Gastrocnemius medialis (tissue), 4 donors: ENCODE measurements at regions of chr2 and their contacts with region 1.

Region 1: DNA sequence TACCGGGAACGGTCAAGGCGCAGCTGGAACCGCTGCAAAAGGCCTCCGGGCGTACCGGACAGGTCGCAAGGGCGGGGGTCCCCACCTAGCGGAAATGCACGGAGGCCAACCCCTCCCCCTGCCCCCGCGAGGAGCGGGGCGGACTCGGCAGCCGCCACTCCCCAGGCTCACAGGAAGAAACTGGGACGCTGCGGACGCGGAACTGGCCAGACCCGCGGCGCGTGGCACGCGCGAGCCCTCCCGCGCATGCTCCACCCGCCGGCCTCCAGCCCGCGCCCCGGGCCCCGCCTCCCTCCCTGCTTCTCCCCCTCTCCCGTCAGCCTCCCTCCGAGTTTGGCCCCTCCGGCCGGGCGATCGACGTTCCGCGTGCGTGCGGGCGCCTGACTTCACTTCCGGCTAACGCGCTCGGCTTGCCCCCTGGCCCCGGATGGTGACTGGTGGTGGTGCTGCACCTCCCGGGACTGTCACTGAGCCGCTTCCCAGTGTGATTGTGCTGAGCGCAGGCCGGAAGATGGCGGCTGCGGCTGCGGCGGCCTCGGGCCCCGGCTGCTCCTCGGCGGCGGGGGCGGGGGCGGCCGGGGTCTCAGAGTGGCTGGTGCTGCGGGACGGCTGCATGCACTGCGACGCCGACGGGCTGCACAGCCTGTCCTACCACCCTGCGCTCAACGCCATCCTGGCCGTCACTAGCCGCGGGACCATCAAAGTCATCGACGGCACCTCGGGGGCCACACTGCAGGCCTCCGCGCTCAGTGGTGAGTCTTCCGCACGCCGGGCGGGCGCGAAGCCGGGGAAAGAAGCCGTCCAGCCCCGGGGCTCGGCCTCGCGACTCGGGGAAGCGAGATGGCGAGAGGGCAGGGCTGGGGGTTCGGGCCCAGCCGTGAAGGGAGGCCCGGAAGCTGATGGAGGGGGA is at the start of gene BIRC6:
- DNase-seq: peak; percentile 99
- ATAC-seq: peak; percentile 89 to 91
- H3K4me3 ChIP-seq: peak within 1 kb of the TSS; percentile 89 to 100 (median 95)
- H3K27ac ChIP-seq: peak within 1 kb of the TSS; percentile 95 to 100 (median 99)
- H3K4me1 ChIP-seq: peaks cover 36 to 42% of the 10 kb centered on the region in 2 donors
- H3K27me3 ChIP-seq: no peaks in the 10 kb centered on the region
- CTCF ChIP-seq: peak in 1 of 5 experiments; percentile 31
- POLR2A ChIP-seq: peak; percentile 91 to 93
- total RNA-seq, gene BIRC6: 60.1 to 107 (median 77.6) TPM

Region 2: GRCh38 chr2:32063310-32064161 is 293.5 kb before region 1 on chr2 and contains the start of gene SPAST:
- in situ Hi-C with region 1: no loop called
- intact Hi-C with region 1: loop called (anchors 5 kb)
- DNase-seq: peak; percentile 96 to 97
- ATAC-seq: peak; percentile 96
- H3K4me3 ChIP-seq: peak within 1 kb of the TSS; percentile 68 to 97 (median 82)
- H3K27ac ChIP-seq: peak within 1 kb of the TSS; percentile 86 to 97 (median 88)
- H3K4me1 ChIP-seq: peaks cover 18% of the 10 kb centered on the region in 2 donors
- H3K27me3 ChIP-seq: no peaks in the 10 kb centered on the region
- CTCF ChIP-seq: peak; percentile 77 to 79 (median 77)
- POLR2A ChIP-seq: peak; percentile 71 to 88
- total RNA-seq, gene SPAST: 25.0 to 30.6 (median 28.9) TPM

Region 3: DNA sequence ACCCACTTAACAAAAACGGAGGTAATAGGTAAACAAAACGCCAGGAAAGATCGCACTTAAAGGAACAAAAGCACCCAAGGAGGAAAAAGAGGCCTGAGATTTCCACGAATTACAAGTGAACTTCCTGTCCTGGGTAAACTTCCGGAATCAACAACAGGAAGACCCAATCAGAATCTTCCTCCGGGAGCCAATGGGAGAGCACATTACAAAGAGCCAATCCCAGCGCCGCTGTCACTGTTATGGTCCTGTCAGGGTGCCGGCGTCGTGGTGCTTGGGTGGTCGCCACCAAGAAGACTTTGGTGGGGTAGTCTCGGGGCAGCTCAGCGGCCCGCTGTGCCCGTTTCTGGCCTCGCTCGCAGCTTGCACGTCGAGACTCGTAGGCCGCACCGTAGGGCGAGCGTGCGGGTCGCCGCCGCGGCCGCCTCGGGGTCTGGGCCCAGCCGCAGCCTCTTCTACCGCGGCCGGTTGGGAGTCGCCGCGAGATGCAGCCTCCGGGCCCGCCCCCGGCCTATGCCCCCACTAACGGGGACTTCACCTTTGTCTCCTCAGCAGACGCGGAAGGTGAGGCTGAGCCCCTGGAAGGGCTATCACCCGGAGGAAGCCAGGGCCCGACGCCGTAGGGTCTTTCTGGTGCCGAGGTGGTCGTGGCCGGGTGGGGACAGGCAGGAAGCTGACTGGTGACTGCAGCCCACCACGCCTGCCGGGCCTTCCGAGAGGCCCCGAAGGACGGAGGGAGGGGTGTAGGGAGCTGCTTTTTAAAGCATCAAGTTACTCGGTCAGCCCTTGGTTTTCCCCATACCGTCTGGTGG is 79.1 kb before region 1 on chr2 and contains the start of gene YIPF4:
- in situ Hi-C with region 1: no loop called
- intact Hi-C with region 1: loop called (anchors 2 kb)
- DNase-seq: peak; percentile 78 to 89
- ATAC-seq: peak; percentile 100
- H3K4me3 ChIP-seq: peak within 1 kb of the TSS; percentile 87 to 97 (median 92)
- H3K27ac ChIP-seq: peak within 1 kb of the TSS; percentile 85 to 90 (median 88)
- H3K4me1 ChIP-seq: peaks cover 12% of the 10 kb centered on the region in 2 donors
- H3K27me3 ChIP-seq: no peaks in the 10 kb centered on the region
- CTCF ChIP-seq: no peak
- POLR2A ChIP-seq: peak; percentile 55 to 68
- total RNA-seq, gene YIPF4: 19.5 to 27.3 (median 23.5) TPM

Region 4: DNA sequence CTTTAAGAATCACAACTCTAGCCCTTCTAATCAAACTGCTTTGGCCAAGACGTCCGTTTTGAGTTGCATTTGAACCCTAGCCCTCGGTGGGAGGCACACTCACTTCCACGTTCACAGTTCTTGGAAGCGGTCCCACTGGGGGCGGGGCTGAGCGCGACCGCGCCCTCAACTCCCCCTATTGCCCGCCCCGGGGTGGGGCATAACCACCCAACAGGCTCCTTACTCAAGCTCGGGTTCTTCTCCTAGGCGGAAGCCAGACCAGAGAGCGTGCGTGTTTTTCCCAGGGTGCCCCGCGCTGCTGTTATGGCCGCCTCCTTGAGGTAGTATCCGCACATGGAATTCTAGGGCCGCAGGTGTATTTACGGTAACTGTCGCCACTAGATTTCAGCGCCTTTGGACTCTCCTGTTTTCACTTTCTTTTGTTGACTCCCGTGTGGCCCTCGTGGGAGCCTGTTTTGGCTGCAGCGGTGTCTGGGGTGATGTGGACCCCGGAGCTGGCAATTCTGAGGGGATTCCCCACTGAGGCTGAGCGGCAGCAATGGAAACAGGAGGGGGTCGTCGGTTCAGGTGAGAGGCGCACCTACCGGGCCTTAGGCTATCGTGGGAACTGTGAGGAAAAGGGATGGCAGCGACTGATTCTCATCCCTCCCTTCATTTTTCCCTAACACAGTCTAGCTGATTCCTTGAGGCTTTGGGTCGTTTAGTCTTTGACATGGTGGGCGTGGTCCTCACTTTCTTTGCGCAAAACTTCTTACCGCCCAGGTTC is 271.0 kb after region 1 on chr2 and contains the start of gene TTC27:
- in situ Hi-C with region 1: no loop called
- intact Hi-C with region 1: loop called (anchors 10 kb)
- DNase-seq: peak; percentile 90 to 94
- ATAC-seq: peak; percentile 96 to 98
- H3K4me3 ChIP-seq: peak within 1 kb of the TSS; percentile 76 to 97 (median 82)
- H3K27ac ChIP-seq: peak within 1 kb of the TSS; percentile 45 to 78 (median 62)
- H3K4me1 ChIP-seq: peaks cover 13% of the 10 kb centered on the region in 2 donors
- H3K27me3 ChIP-seq: no peaks in the 10 kb centered on the region
- CTCF ChIP-seq: peak in 2 of 5 experiments; percentile 4 to 30
- POLR2A ChIP-seq: no peak
- total RNA-seq, gene TTC27: 10.7 to 14.3 (median 12.4) TPM